CD4-positive, alpha-beta memory T cell (primary cell): ENCODE measurements at regions of chr11 and their contacts with region 1.

Region 1: DNA sequence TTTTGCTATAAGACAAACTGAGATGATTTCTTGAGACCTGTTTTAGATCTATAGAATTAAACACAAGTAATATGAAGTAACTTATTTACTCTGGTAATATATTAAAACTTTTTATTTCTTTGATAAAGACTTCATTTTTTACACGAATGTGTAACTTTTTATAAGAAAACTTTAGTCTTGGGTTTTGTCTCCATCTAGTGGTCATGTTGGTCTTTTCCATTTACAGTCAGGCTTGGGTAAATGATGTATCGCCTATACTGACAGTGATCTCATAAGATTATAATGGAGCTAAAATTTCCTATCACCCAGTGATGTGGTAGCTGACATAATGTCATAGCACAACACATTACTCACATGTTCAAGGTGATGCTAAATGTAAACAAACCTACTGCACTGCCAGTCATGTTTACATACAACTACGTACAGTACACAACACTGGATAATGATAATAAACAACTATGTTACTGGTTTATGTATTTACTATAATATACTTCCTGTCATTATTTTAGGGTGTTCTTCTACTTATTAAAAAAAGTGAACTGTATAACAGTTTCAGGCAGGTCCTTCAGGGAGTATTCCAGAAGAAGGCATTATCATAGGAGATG is 7.5 kb upstream of the C11orf97 start:
- DNase-seq: peak in 4 of 5 donors; percentile 42 to 52 (median 48)
- H3K4me3 ChIP-seq: no peak overlapping the region
- H3K4me3 Mint-ChIP-seq: no peak overlapping the region
- H3K27ac ChIP-seq: no peak overlapping the region
- H3K27ac Mint-ChIP-seq: no peak overlapping the region
- H3K4me1 ChIP-seq: no peaks in the 10 kb centered on the region
- H3K4me1 Mint-ChIP-seq: peaks cover 0 to 2% (median 0%) of the 10 kb centered on the region in 4 donors
- H3K27me3 ChIP-seq: no peaks in the 10 kb centered on the region
- H3K27me3 Mint-ChIP-seq: no peaks in the 10 kb centered on the region

Region 2: GRCh38 chr11:93895106-93895862 is 609.5 kb before region 1 on chr11:
- CTCF ChIA-PET with region 1: interaction called, 30 read pairs
- POLR2A ChIA-PET with region 1: no interaction called
- intact Hi-C with region 1: loop called (anchors 1 kb)
- DNase-seq: peak in 4 of 5 donors; percentile 7 to 30 (median 16)
- H3K4me3 ChIP-seq: no peak overlapping the region
- H3K4me3 Mint-ChIP-seq: no peak overlapping the region
- H3K27ac ChIP-seq: no peak overlapping the region
- H3K27ac Mint-ChIP-seq: no peak overlapping the region
- H3K4me1 ChIP-seq: no peaks in the 10 kb centered on the region
- H3K4me1 Mint-ChIP-seq: peaks cover 0 to 3% (median 0%) of the 10 kb centered on the region in 4 donors
- H3K27me3 ChIP-seq: peaks cover 3% of the 10 kb centered on the region
- H3K27me3 Mint-ChIP-seq: peaks cover 27 to 37% of the 10 kb centered on the region in 2 donors

Region 3: GRCh38 chr11:94183886-94184264 is 320.9 kb before region 1 on chr11:
- CTCF ChIA-PET with region 1: interaction called, 4 read pairs
- POLR2A ChIA-PET with region 1: no interaction called
- intact Hi-C with region 1: loop called (anchors 5 kb)
- DNase-seq: peak in 1 of 5 donors; percentile 15
- H3K4me3 ChIP-seq: no peak overlapping the region
- H3K4me3 Mint-ChIP-seq: no peak overlapping the region
- H3K27ac ChIP-seq: no peak overlapping the region
- H3K27ac Mint-ChIP-seq: no peak overlapping the region
- H3K4me1 ChIP-seq: no peaks in the 10 kb centered on the region
- H3K4me1 Mint-ChIP-seq: no peaks in the 10 kb centered on the region
- H3K27me3 ChIP-seq: no peaks in the 10 kb centered on the region
- H3K27me3 Mint-ChIP-seq: no peaks in the 10 kb centered on the region

Region 4: DNA sequence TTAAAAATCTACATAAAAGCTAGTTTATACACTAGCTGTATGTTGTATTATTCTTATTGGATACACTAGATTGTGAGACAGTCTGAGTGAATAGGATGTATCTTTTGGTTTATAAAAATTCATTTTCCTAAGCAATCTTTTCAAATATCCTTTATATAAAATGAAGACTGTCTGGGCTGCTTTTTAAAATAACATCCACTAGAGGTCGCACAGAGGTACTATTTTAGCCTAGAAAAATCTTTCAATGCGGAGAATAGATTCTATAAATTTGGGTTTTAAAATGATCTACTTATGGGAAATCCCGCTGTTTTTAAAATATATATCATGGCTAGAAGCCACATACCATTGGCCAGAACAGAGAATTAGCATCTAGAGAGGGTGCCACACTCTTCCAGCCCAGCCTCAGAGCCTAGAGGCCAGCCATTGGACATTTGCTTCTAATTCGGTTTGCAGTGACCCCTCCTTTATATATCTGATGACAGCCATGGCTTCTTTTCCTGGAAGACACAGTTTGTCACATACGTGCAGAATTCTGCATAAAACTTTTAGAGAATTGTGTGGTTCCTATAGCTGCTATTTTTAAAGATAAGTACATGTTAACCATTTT is 14.8 kb after region 1 on chr11:
- CTCF ChIA-PET with region 1: interaction called, 35 read pairs
- POLR2A ChIA-PET with region 1: no interaction called
- intact Hi-C with region 1: no loop called
- DNase-seq: peak in 4 of 5 donors; percentile 16 to 34 (median 25)
- H3K4me3 ChIP-seq: no peak overlapping the region
- H3K4me3 Mint-ChIP-seq: no peak overlapping the region
- H3K27ac ChIP-seq: no peak overlapping the region
- H3K27ac Mint-ChIP-seq: no peak overlapping the region
- H3K4me1 ChIP-seq: no peaks in the 10 kb centered on the region
- H3K4me1 Mint-ChIP-seq: no peaks in the 10 kb centered on the region
- H3K27me3 ChIP-seq: no peaks in the 10 kb centered on the region
- H3K27me3 Mint-ChIP-seq: peaks cover 8 to 9% of the 10 kb centered on the region in 2 donors

Region 5: DNA sequence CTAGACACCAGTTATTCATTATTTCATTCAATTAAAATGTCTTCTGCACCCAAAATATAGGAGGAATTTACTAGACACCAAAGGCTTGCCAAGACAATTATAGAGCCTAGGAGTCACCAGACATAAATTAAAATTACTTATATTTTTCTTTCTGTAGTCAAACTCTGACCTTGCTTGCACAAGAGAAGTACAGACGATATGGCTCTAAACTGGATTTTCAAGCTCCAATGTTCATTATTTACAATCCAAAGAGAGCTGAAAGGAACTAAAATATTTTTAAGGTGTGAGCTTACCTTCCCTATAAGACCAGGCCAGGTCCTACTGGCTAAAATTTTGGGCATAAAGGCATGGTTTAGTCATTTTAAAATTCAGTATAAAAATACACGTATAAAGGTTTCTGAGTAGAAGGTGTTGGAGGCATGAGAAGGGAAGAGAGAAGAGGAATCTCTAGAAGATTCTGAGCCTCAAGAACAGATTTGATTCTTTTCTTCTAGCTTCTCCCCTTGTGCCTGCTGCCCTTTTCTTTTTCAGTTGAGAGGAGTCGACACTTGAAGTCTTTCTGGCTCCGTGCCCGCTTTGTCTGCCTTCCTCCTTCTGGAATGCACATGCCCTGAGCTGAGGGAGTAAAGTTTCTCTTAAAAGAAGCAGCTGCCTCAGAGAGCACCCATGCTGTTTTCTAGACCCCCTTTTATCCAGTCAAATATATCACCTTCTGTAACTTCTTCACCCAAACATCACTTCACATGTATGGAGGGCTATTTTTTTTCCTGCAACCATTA is 20.9 kb after region 1 on chr11:
- CTCF ChIA-PET with region 1: interaction called, 10 read pairs
- POLR2A ChIA-PET with region 1: no interaction called
- intact Hi-C with region 1: no loop called
- DNase-seq: no peak
- H3K4me3 ChIP-seq: no peak overlapping the region
- H3K4me3 Mint-ChIP-seq: no peak overlapping the region
- H3K27ac ChIP-seq: no peak overlapping the region
- H3K27ac Mint-ChIP-seq: no peak overlapping the region
- H3K4me1 ChIP-seq: no peaks in the 10 kb centered on the region
- H3K4me1 Mint-ChIP-seq: no peaks in the 10 kb centered on the region
- H3K27me3 ChIP-seq: peaks cover 6% of the 10 kb centered on the region
- H3K27me3 Mint-ChIP-seq: peaks cover 15 to 32% of the 10 kb centered on the region in 2 donors